Activated naive CD4-positive, alpha-beta T cell treated with anti-CD3 and anti-CD28 coated beads for 36 hours (primary cell): ENCODE measurements at regions of chr5 and their contacts with region 1.

Region 1: DNA sequence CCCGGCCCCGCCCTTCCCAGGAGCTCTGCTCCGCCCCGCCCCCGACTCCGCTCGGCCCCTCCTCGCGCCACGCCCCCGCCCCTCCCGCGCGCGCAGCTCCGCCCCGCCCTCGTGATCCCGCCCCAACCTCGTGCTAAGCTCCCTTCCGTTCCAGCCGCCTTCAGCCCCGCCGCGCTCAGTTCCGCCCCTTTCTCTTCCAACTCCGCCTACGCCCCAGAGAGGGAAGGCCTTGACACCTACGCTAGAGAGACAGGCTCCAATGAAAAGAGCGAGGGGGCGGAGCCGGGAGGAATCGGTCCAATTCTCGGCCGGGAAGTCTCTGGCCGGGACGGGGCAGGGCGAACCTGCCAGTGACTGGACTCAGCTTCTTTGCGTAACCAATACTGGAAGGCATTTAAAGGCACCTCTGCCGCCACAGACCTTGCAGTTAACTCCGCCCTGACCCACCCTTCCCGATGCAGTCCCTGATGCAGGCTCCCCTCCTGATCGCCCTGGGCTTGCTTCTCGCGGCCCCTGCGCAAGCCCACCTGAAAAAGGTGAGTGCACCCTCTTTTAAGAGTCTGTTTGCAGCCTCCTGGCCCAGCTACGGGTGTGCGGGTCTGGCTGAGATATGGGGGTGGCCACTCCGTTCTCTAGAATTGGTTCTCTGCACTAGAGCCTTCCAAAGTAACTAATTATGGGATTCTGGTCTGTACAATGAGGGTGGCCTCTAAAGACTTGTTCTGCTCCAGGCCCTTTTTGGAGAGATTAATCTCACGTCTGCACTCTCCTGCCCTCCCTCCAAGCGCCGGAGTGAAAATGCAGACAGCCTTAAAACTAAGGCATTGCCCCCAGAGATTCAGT is at the start of gene GM2A:
- DNase-seq: peak; percentile 99
- H3K4me3 Mint-ChIP-seq: peak within 1 kb of the TSS; percentile 89
- H3K27ac Mint-ChIP-seq: peak within 1 kb of the TSS; percentile 90
- H3K4me1 Mint-ChIP-seq: peaks cover 43% of the 10 kb centered on the region
- H3K27me3 Mint-ChIP-seq: no peaks in the 10 kb centered on the region
- total RNA-seq, gene GM2A: 21.1 to 21.8 TPM

Region 2: GRCh38 chr5:150582241-150583109 is 670.5 kb before region 1 on chr5:
- CTCF ChIA-PET with region 1: no interaction called
- intact Hi-C with region 1: no loop called
- DNase-seq: no peak
- H3K4me3 Mint-ChIP-seq: no peak overlapping the region
- H3K27ac Mint-ChIP-seq: no peak overlapping the region
- H3K4me1 Mint-ChIP-seq: no peaks in the 10 kb centered on the region
- H3K27me3 Mint-ChIP-seq: peaks cover 2% of the 10 kb centered on the region

Region 3: DNA sequence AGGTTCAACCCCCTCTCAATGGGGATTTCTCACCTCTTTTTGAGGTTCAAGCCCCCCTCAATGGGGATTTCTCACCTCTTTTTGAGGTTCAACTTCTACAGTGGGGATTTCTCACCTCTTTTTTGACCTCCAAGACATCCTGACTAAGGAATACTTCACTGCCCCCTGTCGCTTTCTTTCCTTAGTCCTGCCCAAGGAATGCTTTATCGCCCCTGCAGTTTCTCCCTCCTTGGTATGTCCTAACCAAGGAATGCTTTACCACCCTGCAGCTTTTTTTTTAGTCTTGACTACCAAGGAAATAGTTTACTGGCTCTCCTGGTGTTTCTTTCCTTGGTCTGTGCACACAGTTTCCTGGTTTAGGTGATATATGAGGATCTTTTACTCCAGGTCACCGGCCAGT is 416.3 kb before region 1 on chr5:
- CTCF ChIA-PET with region 1: no interaction called
- intact Hi-C with region 1: no loop called
- DNase-seq: no peak
- H3K4me3 Mint-ChIP-seq: no peak overlapping the region
- H3K27ac Mint-ChIP-seq: no peak overlapping the region
- H3K4me1 Mint-ChIP-seq: peaks cover 8% of the 10 kb centered on the region
- H3K27me3 Mint-ChIP-seq: no peaks in the 10 kb centered on the region

Region 4: DNA sequence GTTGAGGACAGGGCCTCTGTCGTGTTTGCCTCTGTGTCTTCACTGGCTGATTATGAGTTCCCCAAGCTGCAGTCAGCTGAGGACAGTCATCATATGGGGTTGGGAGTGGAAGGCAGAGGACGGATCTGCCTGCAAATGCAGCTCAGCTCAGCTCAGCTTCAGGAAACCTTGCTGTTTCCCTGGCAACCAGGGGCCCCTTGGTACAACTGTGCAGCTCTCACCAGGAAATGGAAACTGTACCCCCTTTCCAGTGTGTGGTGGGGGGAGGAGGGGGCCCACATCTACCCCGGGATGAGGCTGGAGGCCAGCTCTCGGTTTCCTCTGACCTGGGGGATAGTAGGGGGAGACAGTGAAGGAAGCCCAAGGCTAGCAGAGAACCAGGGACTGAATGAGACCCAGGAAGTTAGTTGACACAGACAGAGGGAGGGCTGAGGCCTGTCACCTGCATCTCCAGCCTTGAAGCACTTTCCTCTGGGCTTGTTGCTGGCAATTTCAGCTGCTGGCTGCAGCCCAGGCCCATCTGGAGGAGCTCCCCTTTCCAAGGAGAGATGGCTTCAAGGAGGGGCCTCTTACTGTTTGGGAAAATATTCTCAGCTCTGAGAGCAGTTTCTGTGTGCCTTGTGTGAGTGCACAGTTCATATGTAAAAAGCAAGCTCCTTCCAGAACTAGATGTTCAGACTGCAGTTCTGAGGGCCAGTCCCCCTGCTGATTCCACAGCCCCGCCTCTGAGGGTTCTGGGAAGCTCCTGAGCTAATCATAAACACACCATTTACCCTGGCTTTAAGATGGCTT is 102.3 kb before region 1 on chr5:
- CTCF ChIA-PET with region 1: no interaction called
- intact Hi-C with region 1: loop called (anchors 1 kb)
- DNase-seq: peak; percentile 91
- H3K4me3 Mint-ChIP-seq: peak overlapping the region; percentile 64
- H3K27ac Mint-ChIP-seq: peak overlapping the region; percentile 90
- H3K4me1 Mint-ChIP-seq: peaks cover 94% of the 10 kb centered on the region
- H3K27me3 Mint-ChIP-seq: no peaks in the 10 kb centered on the region

Region 5: DNA sequence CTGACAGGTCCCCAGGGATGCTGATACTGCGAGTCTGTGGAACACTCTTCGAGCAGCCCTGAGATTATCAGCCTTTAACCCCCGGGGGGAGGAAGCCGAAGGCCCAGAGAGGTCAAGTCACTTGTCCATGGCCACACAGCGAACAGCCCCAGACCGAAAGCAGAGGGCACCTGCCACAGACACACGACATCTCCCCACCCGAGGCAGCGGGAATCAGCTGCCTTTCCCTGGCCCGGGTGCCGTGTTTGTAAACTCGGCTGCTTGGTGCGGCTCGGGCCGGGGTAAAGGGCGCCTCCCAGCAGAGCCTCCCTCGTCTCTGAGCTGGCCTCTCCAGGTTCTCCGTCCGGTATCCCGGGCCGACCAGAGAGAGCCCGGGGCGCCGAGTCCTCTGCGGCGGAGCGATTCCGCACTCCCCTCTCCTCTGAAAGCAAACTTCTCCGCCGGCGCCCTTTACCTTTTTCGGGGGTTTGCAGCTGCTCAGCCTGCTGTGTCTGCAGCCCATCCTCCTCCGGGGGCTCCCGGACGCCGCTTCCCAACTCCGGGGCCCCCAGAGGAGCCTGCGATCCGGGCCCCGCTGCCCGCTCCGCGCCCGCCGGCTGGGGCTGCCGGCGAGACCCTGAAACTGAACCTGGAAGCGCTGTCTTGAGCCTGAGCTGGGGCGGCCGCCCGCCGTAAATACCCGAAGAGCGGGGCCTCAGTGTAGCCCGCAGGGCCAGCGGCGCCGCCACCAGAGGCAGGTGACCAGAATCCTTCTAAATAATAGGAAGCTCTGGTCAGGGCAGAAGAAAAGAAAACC is 29.3 kb before region 1 on chr5 and contains the start of gene CCDC69:
- CTCF ChIA-PET with region 1: interaction called, 10 read pairs
- intact Hi-C with region 1: loop called (anchors 1 kb)
- DNase-seq: peak; percentile 59
- H3K4me3 Mint-ChIP-seq: peak within 1 kb of the TSS; percentile 85
- H3K27ac Mint-ChIP-seq: peak within 1 kb of the TSS; percentile 93
- H3K4me1 Mint-ChIP-seq: peaks cover 56% of the 10 kb centered on the region
- H3K27me3 Mint-ChIP-seq: no peaks in the 10 kb centered on the region
- total RNA-seq, gene CCDC69: 15.5 to 18.5 TPM

Region 6: DNA sequence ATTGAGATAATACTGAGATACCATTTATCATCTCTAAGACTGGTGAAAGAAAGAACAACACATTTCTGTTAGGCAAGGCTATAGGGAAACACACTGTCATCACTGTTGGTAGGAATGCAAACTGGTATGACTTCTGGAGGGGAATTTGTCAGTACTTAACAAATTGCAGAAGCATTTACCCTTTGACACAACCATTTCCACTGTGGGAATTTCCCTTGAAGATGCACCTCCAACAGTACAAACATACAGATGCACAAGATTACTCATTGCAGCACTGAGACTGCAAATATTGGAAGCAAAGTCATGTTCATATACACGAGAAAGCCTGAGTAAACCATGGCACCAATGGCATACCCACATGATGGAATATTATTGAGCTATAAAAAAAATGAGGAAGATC is 17.6 kb after region 1 on chr5:
- CTCF ChIA-PET with region 1: interaction called, 3 read pairs
- intact Hi-C with region 1: loop called (anchors 1 kb)
- DNase-seq: peak; percentile 52
- H3K4me3 Mint-ChIP-seq: no peak overlapping the region
- H3K27ac Mint-ChIP-seq: no peak overlapping the region
- H3K4me1 Mint-ChIP-seq: no peaks in the 10 kb centered on the region
- H3K27me3 Mint-ChIP-seq: no peaks in the 10 kb centered on the region

Region 7: DNA sequence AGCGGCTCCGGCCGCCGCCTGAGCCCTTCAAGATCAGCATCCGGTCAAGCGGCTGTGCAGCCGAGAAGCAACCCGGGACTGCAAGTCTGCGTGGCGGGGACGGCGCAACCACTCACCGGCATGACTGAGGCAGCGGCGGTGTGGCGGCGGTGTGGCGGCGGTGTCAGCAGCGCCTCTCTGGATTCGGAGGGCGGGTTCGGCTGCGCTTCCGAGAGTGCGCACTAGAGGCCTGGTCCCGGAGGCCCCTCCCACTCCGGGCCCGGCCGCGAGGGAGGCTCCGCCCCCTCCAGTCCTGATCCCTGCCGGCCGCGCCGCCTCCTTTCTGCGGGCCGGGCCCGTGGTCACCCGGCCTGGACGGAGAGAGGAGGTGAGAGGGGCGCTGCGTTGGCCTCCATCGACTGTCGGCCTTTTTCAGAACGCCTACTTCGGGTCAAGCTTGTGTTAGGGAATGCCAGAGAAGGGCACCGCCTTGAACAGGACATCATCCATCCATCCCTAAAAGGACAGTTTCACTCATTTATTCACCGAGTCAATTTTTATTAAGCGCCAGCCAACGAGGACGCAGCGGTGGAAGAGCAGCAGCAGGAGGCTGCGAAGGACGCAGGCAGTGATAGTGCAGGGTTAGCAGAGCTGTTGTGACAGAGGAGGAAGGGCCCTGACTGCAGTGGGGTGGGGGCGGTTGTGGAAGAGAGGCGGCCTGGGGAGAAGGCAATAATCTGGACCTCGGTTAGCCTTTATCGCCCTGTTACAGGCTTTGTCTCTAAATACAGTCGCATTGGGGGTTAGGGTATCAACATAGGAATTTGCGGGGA is 505.7 kb after region 1 on chr5 and contains the start of gene ATOX1:
- CTCF ChIA-PET with region 1: no interaction called
- intact Hi-C with region 1: loop called (anchors 5 kb)
- DNase-seq: peak; percentile 91
- H3K4me3 Mint-ChIP-seq: peak within 1 kb of the TSS; percentile 81
- H3K27ac Mint-ChIP-seq: peak within 1 kb of the TSS; percentile 78
- H3K4me1 Mint-ChIP-seq: peaks cover 30% of the 10 kb centered on the region
- H3K27me3 Mint-ChIP-seq: no peaks in the 10 kb centered on the region
- total RNA-seq, gene ATOX1: 87.7 to 92.6 TPM